Right cardiac atrium (tissue), 5 donors: ENCODE measurements at regions of chr2 and their contacts with region 1.

Region 1: GRCh38 chr2:131673392-131674173 is 145.9 kb downstream of the CCDC74A start:
- DNase-seq: peak; percentile 81 to 92 (median 91)
- ATAC-seq: peak; percentile 97 to 98
- H3K4me3 ChIP-seq: peak overlapping the region; percentile 6
- H3K27ac ChIP-seq: no peak overlapping the region
- H3K4me1 ChIP-seq: no peaks in the 10 kb centered on the region
- H3K27me3 ChIP-seq: no peaks in the 10 kb centered on the region

Region 2: DNA sequence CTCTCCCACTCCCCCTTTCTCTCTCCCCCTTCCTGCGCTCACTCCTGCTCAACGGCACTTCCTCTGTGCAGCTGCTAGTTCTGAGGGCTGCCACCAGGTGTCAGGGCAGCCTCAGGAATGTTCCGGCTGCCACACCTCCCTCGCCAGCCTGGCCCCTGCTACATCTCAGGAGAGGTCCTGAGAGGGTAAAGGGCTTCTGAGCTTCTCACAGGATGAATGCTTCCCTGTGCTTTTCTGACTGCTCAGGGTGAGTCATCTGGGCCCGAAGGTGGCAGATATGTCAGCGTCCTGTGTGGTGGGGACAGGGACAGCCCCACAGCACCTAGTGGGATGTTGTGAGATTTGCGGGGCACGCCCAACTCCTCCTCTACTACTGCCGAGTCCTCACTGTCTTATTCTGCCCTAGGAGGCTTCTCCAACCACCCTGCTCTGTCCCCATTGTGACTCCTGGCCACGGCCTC is 519.5 kb before region 1 on chr2:
- intact Hi-C with region 1: loop called in 1 of 4 experiments (anchors 10 kb)
- DNase-seq: peak; percentile 55 to 76 (median 75)
- ATAC-seq: peak; percentile 81 to 84
- H3K4me3 ChIP-seq: no peak overlapping the region
- H3K27ac ChIP-seq: no peak overlapping the region
- H3K4me1 ChIP-seq: no peaks in the 10 kb centered on the region
- H3K27me3 ChIP-seq: no peaks in the 10 kb centered on the region

Region 3: DNA sequence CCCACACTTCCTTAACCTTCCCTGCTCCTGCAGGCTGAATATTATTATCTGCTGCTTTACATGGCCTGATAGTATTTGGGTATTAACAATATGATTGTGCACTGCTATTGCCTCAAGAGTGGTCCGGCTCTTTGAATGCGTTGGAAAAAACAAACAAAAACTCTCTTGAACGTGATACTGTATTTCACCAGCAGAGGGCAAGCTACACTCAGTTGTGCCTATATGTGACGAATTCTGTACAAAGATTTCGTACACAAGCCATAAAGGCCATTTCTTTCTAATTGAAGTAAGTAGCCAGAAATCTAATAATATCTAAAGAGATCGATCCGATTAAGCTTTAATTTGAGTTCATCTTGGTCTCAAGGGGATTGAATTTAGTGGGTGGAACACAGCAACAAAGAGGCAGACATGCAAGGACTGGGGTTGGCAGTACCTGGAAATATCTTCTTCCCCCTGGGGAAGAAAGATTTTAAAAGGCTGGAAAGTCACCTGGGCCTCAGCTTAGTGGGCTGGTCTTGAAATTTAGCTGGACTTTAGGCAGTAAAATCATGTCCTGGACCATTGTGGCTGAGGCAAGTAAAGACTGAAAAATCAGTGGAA is 260.3 kb before region 1 on chr2:
- intact Hi-C with region 1: loop called in 3 of 4 experiments (anchors 5 to 10 kb)
- DNase-seq: no peak
- ATAC-seq: peak in 1 of 2 donors; percentile 45
- H3K4me3 ChIP-seq: no peak overlapping the region
- H3K27ac ChIP-seq: no peak overlapping the region
- H3K4me1 ChIP-seq: no peaks in the 10 kb centered on the region
- H3K27me3 ChIP-seq: peaks cover 2% of the 10 kb centered on the region

Region 4: GRCh38 chr2:131635611-131636010 is 38.0 kb before region 1 on chr2:
- intact Hi-C with region 1: no loop called
- DNase-seq: no peak
- ATAC-seq: no peak
- H3K4me3 ChIP-seq: no peak overlapping the region
- H3K27ac ChIP-seq: no peak overlapping the region
- H3K4me1 ChIP-seq: no peaks in the 10 kb centered on the region
- H3K27me3 ChIP-seq: no peaks in the 10 kb centered on the region

Region 5: DNA sequence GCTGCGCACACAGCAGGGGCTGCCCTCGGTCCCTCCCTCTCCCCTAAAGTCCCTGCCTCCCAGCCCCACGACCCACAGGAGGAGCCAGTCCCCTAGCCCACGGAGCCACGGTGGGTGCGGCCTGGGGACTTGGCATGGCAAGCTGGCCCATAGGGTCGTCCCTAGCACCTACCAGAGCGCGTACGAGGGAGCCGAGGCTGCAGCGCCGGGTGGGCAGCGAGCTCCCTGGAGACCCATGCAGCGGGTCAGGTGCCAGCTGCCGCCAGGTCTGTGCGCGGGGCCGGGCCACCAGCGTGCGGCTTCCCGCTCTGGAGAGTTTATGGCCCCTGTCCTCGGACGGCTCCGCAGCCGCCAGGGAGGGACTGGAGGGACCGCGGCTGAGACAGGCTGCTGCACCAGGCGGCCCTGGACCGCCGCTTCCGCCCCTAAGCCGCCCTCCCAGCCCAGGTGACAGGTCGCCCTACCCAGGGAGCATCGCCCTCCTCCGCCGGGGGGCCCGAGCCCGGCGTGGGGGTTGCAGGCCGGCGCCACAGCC is 127.7 kb after region 1 on chr2:
- intact Hi-C with region 1: loop called in 1 of 4 experiments (anchors 10 kb)
- DNase-seq: peak; percentile 12 to 61 (median 57)
- ATAC-seq: no peak
- H3K4me3 ChIP-seq: no peak overlapping the region
- H3K27ac ChIP-seq: no peak overlapping the region
- H3K4me1 ChIP-seq: no peaks in the 10 kb centered on the region
- H3K27me3 ChIP-seq: no peaks in the 10 kb centered on the region